ENCODE measurements at regions of chr14 and their contacts with region 1.

Region 1: DNA sequence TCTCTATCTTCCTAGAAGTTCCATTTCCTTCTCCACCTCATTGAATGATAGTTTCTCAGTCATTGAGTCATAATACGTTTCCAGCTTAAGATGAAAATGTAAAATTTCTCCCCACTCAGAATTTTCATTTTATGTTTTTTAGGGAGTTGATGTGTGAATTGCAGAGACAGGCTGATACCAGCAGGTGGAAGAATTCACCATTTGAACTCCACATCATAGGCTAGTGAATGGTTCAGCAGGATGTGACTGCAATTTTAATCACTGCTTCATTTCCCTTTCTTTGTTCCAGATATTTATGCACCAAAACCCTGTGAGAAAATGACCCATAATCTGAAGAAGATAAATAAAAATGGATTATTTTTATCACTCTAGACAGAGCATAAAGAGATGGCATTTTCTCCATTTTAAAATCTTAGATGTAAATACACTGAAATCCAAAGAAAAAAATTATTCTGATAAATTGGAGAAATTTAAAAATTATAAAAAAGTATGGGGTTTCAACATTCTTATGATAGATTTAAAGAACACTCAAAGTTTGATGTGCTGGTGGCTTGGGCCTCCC is 10.6 kb upstream of the PYGL start:
- DNase-seq: no peak
- ATAC-seq: peak in 3 of 4 donors; percentile 75 to 83 (median 77)
- H3K4me3 ChIP-seq: no peak overlapping the region
- H3K27ac ChIP-seq: peak overlapping the region in 3 of 12 donors; percentile 11 to 61 (median 58)
- H3K4me1 ChIP-seq: peaks cover 0 to 11% (median 1%) of the 10 kb centered on the region in 12 donors
- H3K27me3 ChIP-seq: no peaks in the 10 kb centered on the region
- CTCF ChIP-seq: peak; percentile 30 to 74 (median 61)
- POLR2A ChIP-seq: no peak

Region 2: DNA sequence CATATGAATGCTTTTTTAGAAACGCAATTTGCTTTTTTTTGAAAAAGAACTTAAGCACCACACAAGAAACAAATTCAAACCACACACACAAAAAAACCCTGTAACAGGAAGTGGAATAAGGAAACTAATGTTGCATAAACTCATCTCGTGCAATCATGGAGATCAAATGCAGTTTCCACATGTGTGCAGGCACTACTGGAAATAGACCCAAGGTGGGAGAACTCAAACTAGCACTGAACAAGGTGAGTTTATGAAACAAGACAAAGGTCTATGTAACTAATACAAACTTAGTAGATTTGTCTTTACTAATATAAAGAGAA is 141.4 kb before region 1 on chr14:
- intact Hi-C with region 1: no loop called
- DNase-seq: no peak
- ATAC-seq: no peak
- H3K4me3 ChIP-seq: peak overlapping the region in 1 of 12 donors; percentile 29
- H3K27ac ChIP-seq: peak overlapping the region in 1 of 12 donors; percentile 85
- H3K4me1 ChIP-seq: peaks cover 0 to 48% (median 10%) of the 10 kb centered on the region in 12 donors
- H3K27me3 ChIP-seq: no peaks in the 10 kb centered on the region
- CTCF ChIP-seq: no peak
- POLR2A ChIP-seq: no peak

Region 3: GRCh38 chr14:51094901-51095853 is 140.3 kb after region 1 on chr14 and contains the start of gene TRIM9:
- intact Hi-C with region 1: loop called in 1 of 10 experiments (anchors 10 kb)
- DNase-seq: peak; percentile 89 to 95 (median 93)
- ATAC-seq: peak; percentile 95 to 98 (median 96)
- H3K4me3 ChIP-seq: peak within 1 kb of the TSS; percentile 7 to 77 (median 64)
- H3K27ac ChIP-seq: peak within 1 kb of the TSS; percentile 6 to 82 (median 67)
- H3K4me1 ChIP-seq: peaks cover 0 to 29% (median 9%) of the 10 kb centered on the region in 12 donors
- H3K27me3 ChIP-seq: peaks cover 8 to 60% (median 34%) of the 10 kb centered on the region in 9 donors
- CTCF ChIP-seq: no peak
- POLR2A ChIP-seq: no peak
- total RNA-seq, gene TRIM9: 0.20 to 1.7 (median 0.74) TPM

Region 4: GRCh38 chr14:51219473-51220448 is 264.9 kb after region 1 on chr14:
- intact Hi-C with region 1: loop called in 9 of 10 experiments (anchors 2 to 10 kb)
- DNase-seq: no peak
- ATAC-seq: no peak
- H3K4me3 ChIP-seq: no peak overlapping the region
- H3K27ac ChIP-seq: no peak overlapping the region
- H3K4me1 ChIP-seq: no peaks in the 10 kb centered on the region
- H3K27me3 ChIP-seq: no peaks in the 10 kb centered on the region
- CTCF ChIP-seq: peak; percentile 38 to 75 (median 49)
- POLR2A ChIP-seq: no peak

Region 5: GRCh38 chr14:51228890-51229289 is 274.0 kb after region 1 on chr14:
- intact Hi-C with region 1: loop called in 3 of 10 experiments (anchors 5 to 10 kb)
- DNase-seq: no peak
- ATAC-seq: no peak
- H3K4me3 ChIP-seq: no peak overlapping the region
- H3K27ac ChIP-seq: no peak overlapping the region
- H3K4me1 ChIP-seq: no peaks in the 10 kb centered on the region
- H3K27me3 ChIP-seq: no peaks in the 10 kb centered on the region
- CTCF ChIP-seq: no peak
- POLR2A ChIP-seq: no peak

Region 6: GRCh38 chr14:51498411-51499227 is 543.7 kb after region 1 on chr14:
- intact Hi-C with region 1: no loop called
- DNase-seq: no peak
- ATAC-seq: no peak
- H3K4me3 ChIP-seq: no peak overlapping the region
- H3K27ac ChIP-seq: no peak overlapping the region
- H3K4me1 ChIP-seq: no peaks in the 10 kb centered on the region
- H3K27me3 ChIP-seq: no peaks in the 10 kb centered on the region
- CTCF ChIP-seq: no peak
- POLR2A ChIP-seq: no peak